ENCODE measurements at regions of chr6 and their contacts with region 1.

Region 1: DNA sequence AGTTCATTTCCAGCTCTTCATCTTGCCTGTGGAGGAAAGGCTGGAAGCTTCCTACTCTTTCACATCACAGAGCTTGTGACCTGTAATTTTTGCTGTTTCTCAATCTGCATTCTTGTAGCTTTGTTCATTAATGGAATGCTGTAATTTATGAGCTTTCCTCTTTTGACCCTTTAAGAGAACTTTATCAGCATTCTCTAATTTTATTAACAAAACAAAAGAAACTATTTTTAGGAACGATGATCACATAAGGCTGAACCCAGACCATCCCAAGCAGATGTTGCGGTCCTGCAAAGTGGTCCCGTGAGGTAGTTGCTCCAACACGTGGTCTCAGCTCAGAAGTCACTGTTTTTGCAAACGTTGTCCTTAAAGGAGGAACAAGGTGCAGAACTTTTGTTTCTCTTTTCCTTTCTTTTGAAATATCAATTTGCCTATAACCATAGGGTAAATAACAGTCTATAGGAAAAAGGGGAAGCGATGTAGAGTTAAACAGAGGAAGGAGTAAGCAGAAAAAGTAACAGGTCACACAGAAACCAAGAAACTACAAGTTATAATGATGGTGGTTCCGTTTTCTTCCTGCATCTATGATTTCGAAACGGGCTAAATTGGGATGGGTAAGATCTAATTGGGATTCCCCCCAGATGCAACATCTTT is 121.3 kb upstream of the PHACTR1 start:
- DNase-seq: peak; percentile 44
- H3K4me3 ChIP-seq: no peak overlapping the region
- H3K27ac ChIP-seq: no peak overlapping the region
- H3K4me1 ChIP-seq: peaks cover 23% of the 10 kb centered on the region
- H3K27me3 ChIP-seq: no peaks in the 10 kb centered on the region
- CTCF ChIP-seq: no peak

Region 2: GRCh38 chr6:12296255-12296573 is 299.1 kb before region 1 on chr6:
- CTCF ChIA-PET with region 1: no interaction called
- dilution Hi-C with region 1: no loop called
- in situ Hi-C with region 1: loop called (anchors 5 to 10 kb)
- intact Hi-C with region 1: no loop called
- DNase-seq: peak; percentile 75
- H3K4me3 ChIP-seq: no peak overlapping the region
- H3K27ac ChIP-seq: peak overlapping the region; percentile 61
- H3K4me1 ChIP-seq: peaks cover 11% of the 10 kb centered on the region
- H3K27me3 ChIP-seq: no peaks in the 10 kb centered on the region
- CTCF ChIP-seq: no peak

Region 3: DNA sequence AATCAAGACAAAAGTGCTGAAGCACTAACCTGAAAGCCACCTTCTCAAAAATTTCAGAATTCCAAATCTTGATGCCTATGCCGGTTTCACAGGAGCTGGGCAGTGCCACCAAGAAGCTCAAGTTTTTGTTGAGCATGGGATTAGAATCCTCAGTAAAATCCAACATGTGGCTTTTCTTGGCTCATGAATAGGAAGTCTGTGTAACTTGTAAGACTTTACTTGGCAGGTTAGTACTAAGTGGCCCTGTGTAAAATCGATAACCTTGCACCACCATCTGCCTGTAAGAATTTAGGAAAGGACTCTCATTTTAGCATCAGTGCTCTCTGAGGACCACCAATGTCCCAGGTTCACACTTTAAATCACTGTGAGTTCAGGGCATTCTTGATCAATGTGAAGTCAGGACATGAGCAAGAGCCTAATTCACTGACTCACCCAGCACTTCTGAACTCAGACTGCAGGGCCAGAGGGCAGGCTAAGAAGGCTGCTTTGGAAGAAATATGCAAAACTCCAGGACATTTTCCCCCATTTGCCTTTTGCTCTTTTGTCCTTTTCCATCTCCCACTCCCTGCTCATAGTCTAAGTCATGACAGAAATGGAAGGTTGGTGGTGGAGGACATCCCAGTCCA is 192.0 kb before region 1 on chr6:
- CTCF ChIA-PET with region 1: no interaction called
- dilution Hi-C with region 1: no loop called
- in situ Hi-C with region 1: loop called (anchors 10 to 25 kb)
- intact Hi-C with region 1: no loop called
- DNase-seq: peak; percentile 56
- H3K4me3 ChIP-seq: no peak overlapping the region
- H3K27ac ChIP-seq: no peak overlapping the region
- H3K4me1 ChIP-seq: peaks cover 17% of the 10 kb centered on the region
- H3K27me3 ChIP-seq: no peaks in the 10 kb centered on the region
- CTCF ChIP-seq: peak; percentile 4 to 5